ENCODE measurements at regions of chr12 and their contacts with region 1.

Region 1: DNA sequence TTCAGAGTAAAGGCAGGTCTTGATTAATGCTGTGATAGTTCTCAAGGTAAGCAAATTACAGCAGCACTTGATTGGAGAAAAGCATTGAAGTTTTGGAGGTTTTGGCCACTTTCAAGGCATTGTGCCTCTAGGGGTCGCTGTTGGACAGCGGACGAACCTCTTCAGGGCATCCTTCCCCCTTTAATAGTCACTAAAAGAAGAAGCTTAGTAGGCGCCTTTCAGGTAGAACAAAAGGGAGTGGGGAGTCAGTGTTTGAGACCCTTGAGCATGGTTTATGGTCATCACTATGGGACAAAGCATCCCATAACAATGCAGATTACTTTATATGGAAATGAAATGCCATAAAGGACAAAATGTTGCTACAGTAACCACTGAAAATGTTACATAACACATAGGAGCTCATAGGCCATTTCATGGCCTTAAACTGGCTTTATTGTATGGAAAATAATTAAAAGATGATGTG is 199.5 kb upstream of the DCN start:
- DNase-seq: peak; percentile 86

Region 2: DNA sequence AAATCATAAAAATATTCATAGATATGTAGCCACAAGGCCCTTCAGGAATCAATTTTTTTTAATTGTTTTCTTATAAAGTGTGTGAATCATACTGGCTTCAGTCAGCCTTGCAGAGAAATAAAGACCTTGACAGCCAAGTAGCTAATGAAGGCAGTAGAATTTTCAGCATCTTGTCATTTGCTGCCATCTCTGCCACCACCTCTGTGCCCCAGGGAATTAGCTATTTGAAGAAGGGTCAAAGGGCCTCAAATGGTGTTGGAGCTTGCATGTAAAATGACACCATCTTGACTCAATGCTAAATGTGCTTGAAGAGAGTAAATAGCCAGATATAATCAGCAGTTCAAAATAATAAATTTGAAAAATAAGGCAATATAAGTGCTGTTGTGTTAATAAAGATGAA is 160.0 kb after region 1 on chr12:
- intact Hi-C with region 1: no loop called
- DNase-seq: no peak

Region 3: GRCh38 chr12:91811481-91812287 is 429.6 kb after region 1 on chr12:
- intact Hi-C with region 1: loop called (anchors 5 kb)
- DNase-seq: peak; percentile 86

Region 4: GRCh38 chr12:92244036-92244435 is 861.9 kb after region 1 on chr12:
- intact Hi-C with region 1: loop called (anchors 10 kb)
- DNase-seq: no peak

Region 5: DNA sequence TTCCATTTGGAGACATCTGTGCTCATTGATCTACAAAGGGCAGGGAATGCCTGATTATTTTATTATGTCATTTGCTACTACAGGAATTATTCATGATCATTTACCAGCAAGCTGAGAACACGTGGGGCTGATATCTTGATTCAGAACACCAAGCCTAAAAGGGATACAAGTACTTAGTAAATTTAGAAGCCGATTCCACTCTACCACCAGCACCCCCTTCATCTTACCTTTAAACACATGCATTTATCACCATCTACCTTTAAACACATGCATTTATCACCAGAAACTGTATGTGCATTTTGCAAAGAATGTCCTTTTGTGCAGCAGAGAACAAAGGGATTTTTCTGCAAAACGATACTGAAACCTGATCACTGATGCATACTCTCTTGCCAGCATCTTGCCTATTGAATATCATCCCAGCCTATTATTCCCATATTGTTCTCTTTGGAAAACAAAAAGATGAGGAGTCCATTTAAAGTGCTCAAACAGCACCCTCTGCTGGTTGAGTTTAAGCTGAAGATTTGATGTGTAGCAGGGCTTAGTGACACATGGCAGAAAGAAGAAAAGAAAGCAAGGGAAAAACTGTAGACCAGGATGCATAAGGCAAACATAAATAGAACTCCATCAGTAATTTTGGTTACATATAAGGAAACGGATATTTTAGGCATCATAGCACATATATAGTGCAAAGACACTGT is 1188.1 kb after region 1 on chr12:
- intact Hi-C with region 1: loop called (anchors 5 kb)
- DNase-seq: no peak

Region 6: GRCh38 chr12:92649511-92650227 is 1267.6 kb after region 1 on chr12:
- intact Hi-C with region 1: loop called (anchors 5 kb)
- DNase-seq: no peak

Measured in cardiac septum (tissue), 1 donor.